ENCODE measurements at regions of chrX and their contacts with region 1.

Region 1: DNA sequence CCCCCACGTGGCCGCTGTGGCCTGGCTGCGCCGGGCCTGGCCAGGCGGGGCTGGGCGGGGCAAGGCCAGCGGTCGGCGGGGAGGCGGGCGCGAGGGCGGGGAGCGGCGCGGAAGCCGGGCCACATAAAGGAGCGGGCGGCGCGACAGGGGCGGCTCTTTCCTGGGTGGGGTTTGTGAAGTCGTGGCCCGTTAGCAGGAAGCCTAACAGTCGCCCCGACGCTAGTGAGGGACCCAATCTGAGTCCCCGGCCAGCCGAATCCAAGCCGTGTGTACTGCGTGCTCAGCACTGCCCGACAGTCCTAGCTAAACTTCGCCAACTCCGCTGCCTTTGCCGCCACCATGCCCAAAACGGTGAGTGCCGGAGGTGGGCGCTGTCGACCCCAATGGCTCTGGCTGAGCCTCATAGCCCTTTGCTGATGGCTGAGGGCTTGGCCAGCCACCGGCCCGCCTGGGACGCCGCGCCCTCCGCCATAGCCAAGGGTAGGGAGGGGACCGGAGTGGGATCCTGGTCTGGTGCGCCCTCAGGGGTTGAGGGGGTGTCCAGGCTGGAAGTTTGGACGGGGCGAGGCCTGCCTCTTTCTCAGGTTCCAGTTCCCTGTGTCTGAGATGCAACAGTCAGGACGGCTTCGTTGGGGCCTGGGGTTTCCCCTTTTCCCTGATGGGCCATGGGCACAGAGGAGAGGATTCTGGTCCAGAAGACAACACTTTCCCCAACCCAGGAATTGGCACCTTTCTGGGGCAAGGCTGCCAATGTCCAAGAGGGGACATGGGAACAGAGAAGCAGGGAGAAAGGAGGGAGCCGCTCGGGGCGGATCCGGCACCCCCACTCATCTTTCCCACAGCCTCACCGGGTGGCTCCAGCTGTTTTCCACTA is at the start of gene MSN:
- DNase-seq: peak in 1 of 2 donors; percentile 85
- H3K4me3 ChIP-seq: peak within 1 kb of the TSS; percentile 73 to 74
- H3K27ac ChIP-seq: peak within 1 kb of the TSS; percentile 91 to 99
- H3K4me1 ChIP-seq: peaks cover 0 to under 1% of the 10 kb centered on the region in 2 donors
- H3K27me3 ChIP-seq: no peaks in the 10 kb centered on the region
- CTCF ChIP-seq: no peak
- total RNA-seq, gene MSN: 338 TPM

Region 2: GRCh38 chrX:65601530-65602220 is 66.1 kb before region 1 on chrX:
- intact Hi-C with region 1: loop called (anchors 2 kb)
- DNase-seq: peak; percentile 80 to 96
- H3K4me3 ChIP-seq: no peak overlapping the region
- H3K27ac ChIP-seq: peak overlapping the region; percentile 88 to 89
- H3K4me1 ChIP-seq: peaks cover 10 to 37% of the 10 kb centered on the region in 2 donors
- H3K27me3 ChIP-seq: no peaks in the 10 kb centered on the region
- CTCF ChIP-seq: peak in 2 of 3 experiments; percentile 26 to 38

Measured in ascending aorta (tissue), 2 donors.